ENCODE measurements at regions of chr15 and their contacts with region 1.

Region 1: GRCh38 chr15:77543159-77543882 is 89.4 kb downstream of the LINGO1 start:
- DNase-seq: peak; percentile 64
- H3K4me3 Mint-ChIP-seq: peak overlapping the region; percentile 76
- H3K27ac Mint-ChIP-seq: no peak overlapping the region
- H3K4me1 Mint-ChIP-seq: peaks cover 8% of the 10 kb centered on the region
- H3K27me3 Mint-ChIP-seq: peaks cover 15% of the 10 kb centered on the region

Region 2: DNA sequence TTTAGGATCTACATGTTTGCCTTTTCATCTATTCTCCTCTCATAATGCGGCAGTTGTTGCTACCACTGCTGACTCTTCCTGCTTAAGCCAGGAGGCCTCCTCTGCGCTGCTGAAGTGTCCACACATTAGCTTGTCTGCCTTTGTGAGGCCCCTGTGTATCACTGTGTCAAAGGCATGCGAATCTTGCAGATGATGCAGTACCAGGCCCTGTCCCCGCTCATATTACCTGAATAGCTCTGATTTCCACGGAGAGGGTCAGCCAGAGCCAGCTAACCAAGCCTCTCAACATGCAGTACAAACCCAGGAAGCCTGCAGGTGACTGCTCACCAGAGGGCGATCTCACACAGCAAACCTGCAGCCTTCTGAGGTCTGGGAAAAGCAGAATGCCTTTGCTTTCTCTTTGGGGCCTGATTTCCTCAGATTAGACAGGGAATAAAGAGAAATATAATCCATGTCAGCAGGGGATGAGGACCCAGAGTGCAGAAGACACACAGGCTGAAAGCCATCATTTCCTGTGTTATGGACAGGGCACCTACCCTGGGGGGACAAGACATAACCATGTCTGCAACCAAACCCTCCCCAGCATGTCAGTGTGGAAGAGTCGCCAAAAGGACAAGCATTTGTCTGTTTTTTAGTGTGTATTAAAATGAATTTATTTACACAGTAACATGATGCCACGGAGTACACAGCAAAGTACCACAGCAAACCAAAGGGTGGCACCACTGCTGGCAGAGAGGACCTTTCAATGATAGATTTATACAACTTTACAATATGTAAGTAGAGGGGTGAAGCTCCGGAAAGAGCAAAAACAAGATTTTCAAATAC is 435.6 kb before region 1 on chr15:
- intact Hi-C with region 1: loop called (anchors 1 kb)
- DNase-seq: peak; percentile 9
- H3K4me3 Mint-ChIP-seq: no peak overlapping the region
- H3K27ac Mint-ChIP-seq: no peak overlapping the region
- H3K4me1 Mint-ChIP-seq: no peaks in the 10 kb centered on the region
- H3K27me3 Mint-ChIP-seq: no peaks in the 10 kb centered on the region

Region 3: GRCh38 chr15:77118882-77119321 is 424.4 kb before region 1 on chr15:
- intact Hi-C with region 1: loop called (anchors 1 kb)
- DNase-seq: peak; percentile 15
- H3K4me3 Mint-ChIP-seq: no peak overlapping the region
- H3K27ac Mint-ChIP-seq: no peak overlapping the region
- H3K4me1 Mint-ChIP-seq: peaks cover 4% of the 10 kb centered on the region
- H3K27me3 Mint-ChIP-seq: peaks cover 6% of the 10 kb centered on the region

Region 4: DNA sequence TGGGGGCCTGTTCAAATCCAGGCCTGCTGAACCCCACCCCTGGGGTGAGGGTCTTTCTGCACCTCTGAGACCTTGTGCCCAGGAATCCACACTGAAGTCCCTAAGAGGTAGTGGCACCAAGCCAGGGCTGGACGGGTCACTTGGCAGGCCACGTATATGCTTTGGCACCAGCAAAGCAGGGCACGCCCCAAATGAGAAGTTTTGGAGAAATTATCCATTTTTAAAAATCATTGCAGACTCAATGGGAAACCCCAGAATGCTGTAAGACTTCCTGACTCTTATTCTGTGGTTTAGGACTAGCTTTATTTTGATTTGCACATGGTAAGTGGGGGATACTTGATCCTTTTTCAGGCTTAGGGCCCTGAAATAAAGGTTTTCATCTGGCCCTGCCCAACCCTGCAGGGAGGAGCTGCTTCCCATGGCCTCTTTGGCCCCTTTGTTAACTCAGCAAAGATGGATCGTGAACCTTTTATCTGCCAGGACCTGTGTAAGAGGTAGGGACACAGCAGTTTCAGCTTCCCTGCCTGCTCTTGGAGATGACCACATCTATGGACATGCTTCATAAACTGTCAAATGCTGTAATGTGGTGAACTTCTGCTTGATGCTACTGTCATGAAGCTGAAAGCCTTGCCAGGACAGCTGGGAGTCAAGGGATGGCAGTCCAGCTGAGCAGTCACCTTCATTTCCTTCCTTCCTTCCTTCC is 34.6 kb before region 1 on chr15:
- intact Hi-C with region 1: no loop called
- DNase-seq: no peak
- H3K4me3 Mint-ChIP-seq: no peak overlapping the region
- H3K27ac Mint-ChIP-seq: no peak overlapping the region
- H3K4me1 Mint-ChIP-seq: peaks cover 21% of the 10 kb centered on the region
- H3K27me3 Mint-ChIP-seq: peaks cover 2% of the 10 kb centered on the region

Region 5: DNA sequence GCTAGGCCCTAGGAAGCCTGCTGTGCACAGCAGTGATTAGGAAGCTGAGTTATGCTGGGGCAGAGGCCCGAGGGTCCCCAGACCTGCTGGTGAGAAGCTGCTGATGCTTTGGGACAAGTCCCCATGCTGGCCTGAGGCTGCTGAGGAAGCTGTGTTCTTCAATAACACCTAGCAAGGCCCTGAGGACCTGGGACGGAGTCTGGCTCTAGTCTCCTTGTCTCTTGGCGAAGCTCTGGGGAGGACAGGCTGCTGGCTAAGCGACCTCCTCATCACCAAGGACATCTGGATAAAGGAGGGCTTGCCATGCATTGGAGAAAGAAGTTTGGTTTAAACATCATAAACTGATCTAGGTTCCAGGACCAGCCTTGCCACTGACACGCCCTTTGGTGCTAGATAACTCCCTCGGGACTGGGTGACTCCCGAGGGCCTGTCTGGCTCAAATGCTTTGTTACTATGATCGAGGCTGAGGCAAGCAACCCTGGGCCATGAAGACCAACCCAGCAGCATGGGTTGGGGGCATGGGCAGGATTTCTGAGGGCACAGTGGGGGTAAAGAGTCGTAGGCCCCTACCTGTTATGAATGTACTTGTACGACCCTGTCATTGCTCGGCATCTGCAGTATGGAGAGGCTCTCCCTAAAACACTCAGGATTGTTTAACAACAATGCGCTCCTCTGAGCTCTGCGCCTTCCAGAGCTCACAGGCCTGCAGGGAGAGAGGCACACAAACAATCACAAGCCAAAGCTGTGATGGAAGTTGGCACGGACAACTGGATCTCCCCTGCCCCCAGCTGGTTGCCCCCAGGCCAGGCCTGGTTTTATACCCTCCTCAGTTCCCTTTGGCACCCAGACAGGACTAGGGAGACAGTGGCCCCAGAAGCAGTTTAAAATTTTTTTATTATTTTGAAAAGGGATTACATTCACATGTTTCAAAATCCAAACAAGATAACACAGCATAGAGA is 25.0 kb after region 1 on chr15:
- intact Hi-C with region 1: no loop called
- DNase-seq: no peak
- H3K4me3 Mint-ChIP-seq: no peak overlapping the region
- H3K27ac Mint-ChIP-seq: no peak overlapping the region
- H3K4me1 Mint-ChIP-seq: no peaks in the 10 kb centered on the region
- H3K27me3 Mint-ChIP-seq: peaks cover 9% of the 10 kb centered on the region